ENCODE measurements at regions of chr19 and their contacts with region 1.

Region 1: GRCh38 chr19:29714953-29715700 is at the start of gene C19orf12:
- DNase-seq: peak; percentile 76
- H3K4me3 Mint-ChIP-seq: peak within 1 kb of the TSS; percentile 88
- H3K27ac Mint-ChIP-seq: peak within 1 kb of the TSS; percentile 87
- H3K4me1 Mint-ChIP-seq: peaks cover 35% of the 10 kb centered on the region
- H3K27me3 Mint-ChIP-seq: no peaks in the 10 kb centered on the region
- CTCF ChIP-seq: no peak
- total RNA-seq, gene C19orf12: 15.4 and 17.5 TPM in 2 replicates

Region 2: GRCh38 chr19:29610563-29611271 is 104.4 kb before region 1 on chr19:
- CTCF ChIA-PET with region 1: interaction called, 16 read pairs
- intact Hi-C with region 1: loop called (anchors 1 kb)
- DNase-seq: peak; percentile 81
- H3K4me3 Mint-ChIP-seq: no peak overlapping the region
- H3K27ac Mint-ChIP-seq: no peak overlapping the region
- H3K4me1 Mint-ChIP-seq: no peaks in the 10 kb centered on the region
- H3K27me3 Mint-ChIP-seq: no peaks in the 10 kb centered on the region
- CTCF ChIP-seq: peak; percentile 69

Region 3: DNA sequence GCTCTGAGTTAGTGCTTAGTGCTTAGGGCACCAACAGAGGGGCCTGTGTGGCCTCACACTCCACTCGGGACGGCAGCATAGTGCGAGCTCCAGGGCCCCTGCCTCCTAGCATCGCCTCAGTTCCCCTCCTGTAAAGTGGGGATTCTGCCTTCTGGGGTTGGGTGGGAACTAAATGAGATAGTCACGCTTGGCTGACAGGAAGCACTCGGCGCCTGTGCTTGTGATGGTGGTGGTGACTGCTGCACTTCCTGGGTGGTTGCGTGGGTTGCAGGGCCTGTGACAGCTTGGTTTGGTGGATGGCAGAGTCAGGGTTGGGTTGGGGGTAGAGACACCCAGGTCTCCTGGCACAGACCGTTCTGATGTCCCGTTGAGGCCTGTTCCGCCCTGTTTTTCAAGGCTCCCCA is 42.2 kb before region 1 on chr19:
- CTCF ChIA-PET with region 1: no interaction called
- intact Hi-C with region 1: no loop called
- DNase-seq: no peak
- H3K4me3 Mint-ChIP-seq: no peak overlapping the region
- H3K27ac Mint-ChIP-seq: no peak overlapping the region
- H3K4me1 Mint-ChIP-seq: peaks cover 23% of the 10 kb centered on the region
- H3K27me3 Mint-ChIP-seq: no peaks in the 10 kb centered on the region
- CTCF ChIP-seq: no peak

Region 4: DNA sequence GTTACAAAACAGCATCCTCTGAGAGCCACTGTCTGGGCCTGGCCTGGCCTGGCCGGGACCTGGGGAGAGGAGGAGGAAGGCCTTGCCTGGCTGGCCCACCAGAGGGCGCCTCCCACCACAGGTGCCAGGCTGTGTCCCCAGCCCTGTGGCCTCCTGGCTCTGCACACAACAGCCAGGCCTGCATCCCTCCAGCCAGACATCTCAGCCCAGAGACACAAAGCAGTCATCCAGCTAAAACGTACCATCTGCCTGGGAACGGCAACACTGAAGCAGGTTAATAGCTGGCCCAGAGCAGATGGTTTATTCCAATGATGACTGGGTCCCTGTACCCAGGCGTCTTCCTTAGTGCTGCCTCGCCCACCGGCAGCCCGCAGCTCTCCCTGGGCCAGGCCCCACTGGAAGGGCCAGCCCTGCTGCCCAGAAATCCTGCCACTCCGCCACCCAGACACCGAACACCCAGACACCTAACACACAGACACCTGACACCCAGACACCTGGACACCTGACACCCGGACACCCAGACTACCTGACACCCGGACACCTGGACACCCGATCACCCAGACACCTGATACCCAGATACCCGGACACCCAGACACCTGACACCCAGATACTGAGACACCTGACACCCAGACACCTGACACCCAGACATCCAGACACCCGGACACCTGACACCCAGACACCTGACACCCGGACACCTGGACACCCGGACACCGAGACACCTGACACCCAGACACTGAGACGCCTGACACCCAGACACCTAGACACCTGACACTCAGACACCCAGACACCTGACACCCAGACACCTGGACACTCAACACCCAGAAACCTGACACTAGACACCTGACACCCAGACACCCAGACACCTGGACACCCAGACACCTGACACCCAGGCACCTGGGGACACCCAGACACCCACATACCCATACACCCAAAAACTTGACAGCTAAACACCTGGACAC is 20.2 kb before region 1 on chr19:
- CTCF ChIA-PET with region 1: no interaction called
- intact Hi-C with region 1: loop called (anchors 1 kb)
- DNase-seq: peak; percentile 77
- H3K4me3 Mint-ChIP-seq: no peak overlapping the region
- H3K27ac Mint-ChIP-seq: no peak overlapping the region
- H3K4me1 Mint-ChIP-seq: no peaks in the 10 kb centered on the region
- H3K27me3 Mint-ChIP-seq: no peaks in the 10 kb centered on the region
- CTCF ChIP-seq: peak; percentile 79

Region 5: GRCh38 chr19:29700498-29700897 is 14.6 kb before region 1 on chr19:
- CTCF ChIA-PET with region 1: interaction called, 10 read pairs
- intact Hi-C with region 1: no loop called
- DNase-seq: no peak
- H3K4me3 Mint-ChIP-seq: no peak overlapping the region
- H3K27ac Mint-ChIP-seq: no peak overlapping the region
- H3K4me1 Mint-ChIP-seq: no peaks in the 10 kb centered on the region
- H3K27me3 Mint-ChIP-seq: no peaks in the 10 kb centered on the region
- CTCF ChIP-seq: no peak

Region 6: DNA sequence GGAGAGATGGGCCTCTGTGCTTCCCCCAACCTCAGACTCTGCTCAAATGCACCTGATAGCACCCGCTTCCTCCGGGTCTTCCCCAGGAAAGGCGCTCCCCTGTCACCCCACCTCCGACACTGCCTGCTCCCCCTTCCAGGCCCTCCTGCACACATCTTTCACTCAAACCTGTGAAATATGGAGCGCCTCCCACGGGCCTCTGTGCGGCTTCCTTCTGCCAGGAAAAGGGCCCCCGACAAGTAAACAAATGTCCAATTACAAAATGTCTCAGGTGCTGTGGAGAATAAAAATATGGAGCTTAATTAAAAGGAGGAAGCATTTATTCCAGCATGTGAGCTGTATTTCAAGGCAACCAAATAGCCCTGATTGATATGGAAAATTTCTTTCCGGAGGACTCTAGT is 81.0 kb after region 1 on chr19:
- CTCF ChIA-PET with region 1: no interaction called
- intact Hi-C with region 1: no loop called
- DNase-seq: no peak
- H3K4me3 Mint-ChIP-seq: no peak overlapping the region
- H3K27ac Mint-ChIP-seq: no peak overlapping the region
- H3K4me1 Mint-ChIP-seq: no peaks in the 10 kb centered on the region
- H3K27me3 Mint-ChIP-seq: peaks cover 78% of the 10 kb centered on the region
- CTCF ChIP-seq: no peak

Measured in Calu3 (cell line).